ENCODE measurements at regions of chr3 and their contacts with region 1.

Region 1: DNA sequence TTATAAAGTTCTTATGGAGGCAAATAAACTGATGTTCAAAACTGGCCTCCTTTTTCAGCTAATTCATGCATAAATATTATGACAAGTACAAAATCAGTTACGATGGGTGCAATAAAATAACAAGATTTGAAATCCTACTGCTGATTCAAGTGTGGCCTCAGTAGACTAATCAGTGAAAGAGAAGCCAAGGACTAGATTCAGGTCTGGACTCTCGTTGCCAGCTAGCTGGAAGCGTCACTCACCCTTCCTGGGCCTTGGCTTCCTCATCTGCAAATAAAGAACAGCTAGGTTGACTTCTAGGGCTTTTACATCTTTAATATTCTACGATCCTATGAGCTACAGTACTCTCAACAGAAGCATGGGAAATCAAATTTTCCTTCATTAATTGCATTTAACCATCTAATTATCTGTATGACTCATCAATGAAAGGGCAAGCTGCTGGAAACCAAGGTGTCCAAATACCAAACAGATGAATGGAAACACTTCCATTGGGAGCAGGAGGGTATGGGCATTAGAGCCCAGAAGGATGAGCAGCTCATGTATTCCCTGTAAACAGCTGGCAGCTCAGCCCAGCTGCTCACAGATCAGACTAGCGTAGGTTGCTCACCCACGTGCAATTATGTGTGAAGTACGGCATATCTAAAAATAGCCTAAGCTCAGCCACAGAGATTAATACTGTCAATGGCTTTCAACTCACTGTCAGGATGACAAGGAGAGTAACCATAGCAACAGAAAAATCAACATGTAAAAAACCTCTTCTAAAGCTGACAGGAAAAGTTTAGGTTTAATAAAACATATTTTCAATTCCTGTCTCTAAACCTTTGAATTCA is 294.8 kb downstream of the PLCL2 start:
- DNase-seq: no peak
- ATAC-seq: peak; percentile 65
- H3K4me3 Mint-ChIP-seq: no peak overlapping the region
- H3K27ac Mint-ChIP-seq: peak overlapping the region; percentile 15
- H3K4me1 Mint-ChIP-seq: peaks cover 30% of the 10 kb centered on the region
- H3K27me3 Mint-ChIP-seq: no peaks in the 10 kb centered on the region
- CTCF ChIP-seq: no peak

Region 2: GRCh38 chr3:17195856-17196604 is 16.4 kb after region 1 on chr3:
- CTCF ChIA-PET with region 1: no interaction called
- POLR2A ChIA-PET with region 1: no interaction called
- intact Hi-C with region 1: loop called (anchors 2 kb)
- DNase-seq: peak; percentile 22
- ATAC-seq: peak; percentile 86
- H3K4me3 Mint-ChIP-seq: peak overlapping the region; percentile 56
- H3K27ac Mint-ChIP-seq: peak overlapping the region; percentile 91
- H3K4me1 Mint-ChIP-seq: peaks cover 44% of the 10 kb centered on the region
- H3K27me3 Mint-ChIP-seq: no peaks in the 10 kb centered on the region
- CTCF ChIP-seq: no peak

Region 3: GRCh38 chr3:17233398-17233800 is 53.8 kb after region 1 on chr3:
- CTCF ChIA-PET with region 1: no interaction called
- POLR2A ChIA-PET with region 1: no interaction called
- intact Hi-C with region 1: no loop called
- DNase-seq: no peak
- ATAC-seq: peak; percentile 98
- H3K4me3 Mint-ChIP-seq: no peak overlapping the region
- H3K27ac Mint-ChIP-seq: no peak overlapping the region
- H3K4me1 Mint-ChIP-seq: peaks cover 19% of the 10 kb centered on the region
- H3K27me3 Mint-ChIP-seq: no peaks in the 10 kb centered on the region
- CTCF ChIP-seq: no peak

Region 4: GRCh38 chr3:17518189-17519059 is 338.8 kb after region 1 on chr3:
- CTCF ChIA-PET with region 1: no interaction called
- POLR2A ChIA-PET with region 1: no interaction called
- intact Hi-C with region 1: no loop called
- DNase-seq: no peak
- ATAC-seq: no peak
- H3K4me3 Mint-ChIP-seq: no peak overlapping the region
- H3K27ac Mint-ChIP-seq: no peak overlapping the region
- H3K4me1 Mint-ChIP-seq: peaks cover 34% of the 10 kb centered on the region
- H3K27me3 Mint-ChIP-seq: no peaks in the 10 kb centered on the region
- CTCF ChIP-seq: no peak

Region 5: GRCh38 chr3:18712713-18713576 is 1533.3 kb after region 1 on chr3:
- CTCF ChIA-PET with region 1: no interaction called
- POLR2A ChIA-PET with region 1: no interaction called
- intact Hi-C with region 1: no loop called
- DNase-seq: no peak
- ATAC-seq: no peak
- H3K4me3 Mint-ChIP-seq: no peak overlapping the region
- H3K27ac Mint-ChIP-seq: no peak overlapping the region
- H3K4me1 Mint-ChIP-seq: peaks cover 22% of the 10 kb centered on the region
- H3K27me3 Mint-ChIP-seq: no peaks in the 10 kb centered on the region
- CTCF ChIP-seq: no peak

Measured in activated B cell treated with CpG ODN at 0.5 μM for 24 hours (primary cell).